ENCODE measurements at regions of chr2 and their contacts with region 1.

Region 1: DNA sequence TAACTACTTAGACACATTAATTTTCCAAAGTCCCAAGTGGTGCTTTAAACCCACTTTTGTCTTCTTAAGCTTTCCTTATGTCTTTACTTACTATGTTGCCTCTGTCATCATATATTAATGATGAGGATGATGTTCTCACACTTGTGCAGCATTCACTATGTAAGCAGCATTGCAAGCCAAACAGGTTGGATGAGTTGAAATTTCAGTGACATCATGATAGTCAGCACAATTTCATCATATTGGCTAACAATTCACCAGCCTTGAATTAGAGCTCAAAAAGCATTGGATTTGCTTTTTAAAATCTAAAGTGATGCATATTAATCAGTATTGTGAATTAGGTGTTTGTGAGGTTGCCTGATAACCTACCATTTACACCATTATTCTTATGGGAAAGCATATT is 7.7 kb downstream of the APLF start:
- DNase-seq: no peak
- H3K4me3 ChIP-seq: no peak overlapping the region
- H3K27ac ChIP-seq: no peak overlapping the region
- H3K4me1 ChIP-seq: no peaks in the 10 kb centered on the region
- H3K27me3 ChIP-seq: no peaks in the 10 kb centered on the region
- CTCF ChIP-seq: no peak
- POLR2A ChIP-seq: no peak

Region 2: DNA sequence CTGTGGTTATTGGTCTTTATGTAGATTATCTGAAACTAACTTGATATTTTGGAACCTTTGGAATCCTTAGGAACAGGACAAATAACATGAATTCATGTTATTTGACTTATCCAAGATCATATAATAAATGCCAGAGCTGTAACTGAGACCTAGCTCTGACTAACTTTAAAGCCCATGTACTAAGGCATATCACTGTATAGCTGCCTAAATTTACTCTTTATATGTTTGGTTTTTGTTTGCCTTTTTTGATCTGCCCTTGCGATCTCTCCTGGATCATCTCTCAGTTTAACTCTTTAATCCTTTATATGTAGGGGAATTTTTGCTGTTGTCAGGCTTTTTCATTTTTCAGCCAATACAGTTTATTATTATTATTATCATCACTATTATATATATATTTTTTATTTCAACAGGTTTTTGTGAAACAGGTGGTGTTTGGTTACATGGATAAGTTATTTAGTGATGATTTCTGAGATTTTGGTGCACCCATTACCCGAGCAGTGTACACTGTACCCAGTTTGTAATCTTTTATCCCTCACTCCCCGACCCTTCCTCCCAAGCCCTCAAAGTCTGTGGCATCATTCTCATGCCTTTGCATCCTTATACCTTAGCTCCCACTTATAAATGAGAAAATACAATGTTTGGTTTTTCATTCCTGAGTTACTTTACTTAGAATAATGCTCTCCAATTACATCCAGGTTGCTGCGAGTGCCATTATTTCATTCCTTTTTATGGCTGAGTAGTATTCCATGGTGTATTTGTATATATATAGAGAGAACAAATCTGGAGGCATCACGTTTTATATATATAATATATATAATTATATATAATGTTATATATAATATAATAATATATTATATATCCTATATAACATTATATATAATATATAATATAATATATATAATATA is 41.2 kb after region 1 on chr2:
- intact Hi-C with region 1: no loop called
- DNase-seq: no peak
- H3K4me3 ChIP-seq: no peak overlapping the region
- H3K27ac ChIP-seq: no peak overlapping the region
- H3K4me1 ChIP-seq: no peaks in the 10 kb centered on the region
- H3K27me3 ChIP-seq: no peaks in the 10 kb centered on the region
- CTCF ChIP-seq: no peak
- POLR2A ChIP-seq: no peak

Region 3: DNA sequence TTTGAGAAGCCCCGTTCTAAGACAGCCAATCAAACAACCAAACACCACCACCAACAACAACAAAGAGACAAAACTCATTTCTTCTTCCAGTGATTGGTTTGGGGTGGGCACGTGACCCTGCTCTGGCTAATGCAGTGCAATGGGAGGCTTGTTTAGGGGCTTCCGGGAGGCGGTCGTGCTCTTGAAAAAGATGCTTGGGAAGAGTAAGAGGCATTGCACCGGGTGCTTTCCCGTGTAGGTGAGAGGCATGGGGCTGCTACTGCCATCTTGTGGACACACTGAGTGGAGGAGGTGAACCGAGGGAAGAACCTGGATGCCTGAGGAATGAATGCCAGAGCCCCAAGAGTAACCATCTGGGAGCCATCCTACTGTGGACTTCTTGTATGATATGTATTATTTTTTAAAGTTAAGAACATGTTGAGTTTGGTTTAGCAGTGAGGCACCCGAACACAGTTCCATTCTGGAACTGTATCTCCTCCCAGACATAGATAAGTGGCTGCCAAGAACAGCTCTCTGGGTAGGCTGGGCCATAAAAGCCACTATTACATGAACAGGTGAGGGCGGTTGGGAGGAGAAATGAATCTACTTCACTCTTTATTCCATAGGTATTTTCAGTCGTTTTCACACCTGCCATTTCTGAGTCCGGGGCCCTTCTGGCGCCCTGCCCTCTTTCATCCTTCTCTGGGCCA is 240.4 kb after region 1 on chr2:
- intact Hi-C with region 1: loop called (anchors 5 kb)
- DNase-seq: peak; percentile 52
- H3K4me3 ChIP-seq: no peak overlapping the region
- H3K27ac ChIP-seq: no peak overlapping the region
- H3K4me1 ChIP-seq: no peaks in the 10 kb centered on the region
- H3K27me3 ChIP-seq: no peaks in the 10 kb centered on the region
- CTCF ChIP-seq: peak in 3 of 4 experiments; percentile 41 to 62 (median 62)
- POLR2A ChIP-seq: no peak